ENCODE measurements at regions of chr11 and their contacts with region 1.

Region 1: DNA sequence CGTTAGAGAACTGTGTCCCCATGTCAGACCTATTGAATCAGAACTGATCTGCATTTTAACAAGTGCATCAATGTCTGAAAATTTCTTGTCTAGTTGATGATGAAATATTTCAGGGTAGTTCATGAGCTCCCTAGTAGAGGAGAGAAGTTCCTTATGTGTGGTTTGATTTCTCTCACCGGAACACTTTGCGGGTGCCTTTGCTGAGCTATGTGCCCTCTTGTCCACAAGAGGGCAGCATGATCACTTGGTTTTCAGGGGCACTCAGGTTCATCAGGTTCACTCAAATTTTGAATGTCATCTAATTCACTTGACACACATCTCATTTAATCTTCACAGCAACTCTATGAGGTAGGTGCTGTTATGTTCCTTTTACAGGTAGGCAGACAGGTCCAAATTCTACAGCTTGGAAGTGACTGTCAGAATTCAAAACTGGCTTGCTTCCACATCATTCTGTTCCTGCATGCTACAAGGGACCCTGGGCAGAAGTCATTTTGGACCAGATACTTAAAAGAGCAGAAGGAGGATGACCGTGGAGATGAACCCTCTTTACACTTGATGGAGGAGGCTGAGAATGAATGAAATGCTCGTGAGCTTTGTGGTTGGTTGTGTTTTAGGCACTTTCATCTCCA is 55.6 kb downstream of the P4HA3 start:
- DNase-seq: peak; percentile 87
- ATAC-seq: peak; percentile 66
- H3K4me3 ChIP-seq: no peak overlapping the region
- H3K27ac ChIP-seq: no peak overlapping the region
- H3K4me1 ChIP-seq: peaks cover 15% of the 10 kb centered on the region
- H3K27me3 ChIP-seq: no peaks in the 10 kb centered on the region
- CTCF ChIP-seq: peak; percentile 99

Region 2: DNA sequence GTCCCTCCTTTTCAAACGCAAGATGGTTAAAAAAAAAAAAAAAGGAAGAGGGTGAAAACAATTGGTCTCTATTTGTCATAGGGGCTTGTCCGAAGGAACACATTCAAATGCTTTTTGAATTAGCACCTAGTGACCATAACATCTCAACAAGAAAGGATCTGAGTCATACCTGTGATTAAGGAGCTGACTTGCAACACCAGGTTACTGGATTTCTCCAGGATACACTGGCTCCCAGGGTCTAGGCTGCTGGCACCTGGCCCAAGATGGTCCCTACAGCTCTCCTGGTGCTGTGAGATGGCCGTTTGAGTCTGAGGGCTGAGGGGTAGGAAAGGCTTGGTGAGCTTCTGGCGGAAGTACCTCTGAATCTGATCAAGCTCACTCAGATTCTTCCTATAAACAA is 218.5 kb before region 1 on chr11:
- CTCF ChIA-PET with region 1: no interaction called
- POLR2A ChIA-PET with region 1: no interaction called
- intact Hi-C with region 1: no loop called
- DNase-seq: peak; percentile 86
- ATAC-seq: peak; percentile 90
- H3K4me3 ChIP-seq: no peak overlapping the region
- H3K27ac ChIP-seq: peak overlapping the region; percentile 66
- H3K4me1 ChIP-seq: peaks cover 28% of the 10 kb centered on the region
- H3K27me3 ChIP-seq: no peaks in the 10 kb centered on the region
- CTCF ChIP-seq: no peak

Region 3: GRCh38 chr11:74237541-74237940 is 18.3 kb before region 1 on chr11:
- CTCF ChIA-PET with region 1: interaction called, 11 read pairs
- POLR2A ChIA-PET with region 1: no interaction called
- intact Hi-C with region 1: no loop called
- DNase-seq: no peak
- ATAC-seq: no peak
- H3K4me3 ChIP-seq: no peak overlapping the region
- H3K27ac ChIP-seq: no peak overlapping the region
- H3K4me1 ChIP-seq: no peaks in the 10 kb centered on the region
- H3K27me3 ChIP-seq: no peaks in the 10 kb centered on the region
- CTCF ChIP-seq: no peak

Region 4: GRCh38 chr11:74321487-74322188 is 65.8 kb after region 1 on chr11:
- CTCF ChIA-PET with region 1: interaction called, 6 read pairs
- POLR2A ChIA-PET with region 1: no interaction called
- intact Hi-C with region 1: loop called (anchors 1 kb)
- DNase-seq: peak; percentile 77
- ATAC-seq: peak; percentile 60
- H3K4me3 ChIP-seq: no peak overlapping the region; the same call in 1 of the 2 replicates
- H3K27ac ChIP-seq: peak overlapping the region; percentile 56
- H3K4me1 ChIP-seq: peaks cover 33% of the 10 kb centered on the region
- H3K27me3 ChIP-seq: no peaks in the 10 kb centered on the region
- CTCF ChIP-seq: peak; percentile 92

Region 5: GRCh38 chr11:74388678-74389327 is 132.9 kb after region 1 on chr11:
- CTCF ChIA-PET with region 1: interaction called, 17 read pairs
- POLR2A ChIA-PET with region 1: no interaction called
- intact Hi-C with region 1: loop called (anchors 1 kb)
- DNase-seq: peak; percentile 87
- ATAC-seq: peak; percentile 95
- H3K4me3 ChIP-seq: no peak overlapping the region
- H3K27ac ChIP-seq: no peak overlapping the region
- H3K4me1 ChIP-seq: peaks cover 4% of the 10 kb centered on the region
- H3K27me3 ChIP-seq: no peaks in the 10 kb centered on the region
- CTCF ChIP-seq: peak; percentile 98

Region 6: GRCh38 chr11:74443071-74443864 is 187.4 kb after region 1 on chr11:
- CTCF ChIA-PET with region 1: interaction called, 8 read pairs
- POLR2A ChIA-PET with region 1: no interaction called
- intact Hi-C with region 1: loop called (anchors 1 kb)
- DNase-seq: peak; percentile 94
- ATAC-seq: peak; percentile 81
- H3K4me3 ChIP-seq: no peak overlapping the region
- H3K27ac ChIP-seq: peak overlapping the region; percentile 77
- H3K4me1 ChIP-seq: peaks cover 18% of the 10 kb centered on the region
- H3K27me3 ChIP-seq: no peaks in the 10 kb centered on the region
- CTCF ChIP-seq: peak; percentile 87

Region 7: GRCh38 chr11:74570266-74571061 is 314.6 kb after region 1 on chr11:
- CTCF ChIA-PET with region 1: interaction called, 5 read pairs
- POLR2A ChIA-PET with region 1: no interaction called
- intact Hi-C with region 1: loop called (anchors 2 kb)
- DNase-seq: peak; percentile 85
- ATAC-seq: peak; percentile 86
- H3K4me3 ChIP-seq: no peak overlapping the region
- H3K27ac ChIP-seq: no peak overlapping the region
- H3K4me1 ChIP-seq: peaks cover 5% of the 10 kb centered on the region; the same call in 1 of the 2 replicates
- H3K27me3 ChIP-seq: no peaks in the 10 kb centered on the region
- CTCF ChIP-seq: peak; percentile 97

Measured in PC-3 (cell line).